ENCODE measurements at regions of chr19 and their contacts with region 1.

Region 1: DNA sequence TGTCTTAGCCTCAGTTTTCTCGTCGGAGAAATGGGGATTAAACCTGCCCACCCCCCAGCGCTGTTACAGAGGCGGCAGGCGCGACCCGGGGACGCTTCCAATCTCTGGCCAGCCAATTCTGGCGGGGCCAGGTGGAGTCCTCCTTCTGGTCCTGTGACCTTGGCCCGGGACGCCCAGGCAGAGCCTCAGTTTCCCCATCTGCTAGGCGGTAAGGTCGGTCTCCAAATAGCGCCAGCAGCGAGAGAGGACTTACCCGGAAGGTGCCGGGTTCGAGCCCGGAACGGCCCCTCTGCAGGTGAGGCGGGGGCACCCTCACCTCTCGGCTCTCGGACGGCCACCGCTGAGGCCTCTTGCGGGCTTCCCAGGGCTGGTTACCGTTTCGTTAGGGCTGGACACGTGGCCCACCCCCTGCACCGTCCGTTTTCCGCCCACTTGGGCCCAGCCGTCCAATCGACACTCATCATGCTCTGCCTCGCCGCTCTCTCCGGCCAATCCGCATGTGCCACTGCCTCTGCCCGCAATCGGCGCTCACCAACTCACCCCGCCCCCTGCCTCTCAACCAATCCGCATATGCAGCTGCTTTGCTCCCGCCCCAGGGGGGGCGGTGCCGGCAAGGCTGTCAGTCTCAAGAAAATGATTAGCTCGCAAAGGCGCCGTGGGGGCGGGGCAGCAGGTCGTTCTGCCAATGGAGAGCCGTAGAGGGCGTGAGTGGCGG is at the start of gene ISOC2:
- DNase-seq: peak; percentile 100
- ATAC-seq: peak; percentile 98
- H3K4me3 Mint-ChIP-seq: peak within 1 kb of the TSS; percentile 80
- H3K27ac Mint-ChIP-seq: peak within 1 kb of the TSS; percentile 82
- H3K4me1 Mint-ChIP-seq: peaks cover 14% of the 10 kb centered on the region
- H3K27me3 Mint-ChIP-seq: no peaks in the 10 kb centered on the region
- total RNA-seq, gene ISOC2: 24.3 to 28.0 TPM

Region 2: GRCh38 chr19:55166530-55167268 is 294.7 kb before region 1 on chr19 and contains the start of gene DNAAF3:
- CTCF ChIA-PET with region 1: interaction called, 3 read pairs
- POLR2A ChIA-PET with region 1: no interaction called
- intact Hi-C with region 1: loop called in 1 of 2 experiments (anchors 2 kb)
- DNase-seq: peak; percentile 95
- ATAC-seq: peak; percentile 95
- H3K4me3 Mint-ChIP-seq: peak within 1 kb of the TSS; percentile 71
- H3K27ac Mint-ChIP-seq: peak within 1 kb of the TSS; percentile 11
- H3K4me1 Mint-ChIP-seq: peaks cover 10% of the 10 kb centered on the region
- H3K27me3 Mint-ChIP-seq: peaks cover 45% of the 10 kb centered on the region
- total RNA-seq, gene DNAAF3: 0.53 to 0.72 TPM

Region 3: DNA sequence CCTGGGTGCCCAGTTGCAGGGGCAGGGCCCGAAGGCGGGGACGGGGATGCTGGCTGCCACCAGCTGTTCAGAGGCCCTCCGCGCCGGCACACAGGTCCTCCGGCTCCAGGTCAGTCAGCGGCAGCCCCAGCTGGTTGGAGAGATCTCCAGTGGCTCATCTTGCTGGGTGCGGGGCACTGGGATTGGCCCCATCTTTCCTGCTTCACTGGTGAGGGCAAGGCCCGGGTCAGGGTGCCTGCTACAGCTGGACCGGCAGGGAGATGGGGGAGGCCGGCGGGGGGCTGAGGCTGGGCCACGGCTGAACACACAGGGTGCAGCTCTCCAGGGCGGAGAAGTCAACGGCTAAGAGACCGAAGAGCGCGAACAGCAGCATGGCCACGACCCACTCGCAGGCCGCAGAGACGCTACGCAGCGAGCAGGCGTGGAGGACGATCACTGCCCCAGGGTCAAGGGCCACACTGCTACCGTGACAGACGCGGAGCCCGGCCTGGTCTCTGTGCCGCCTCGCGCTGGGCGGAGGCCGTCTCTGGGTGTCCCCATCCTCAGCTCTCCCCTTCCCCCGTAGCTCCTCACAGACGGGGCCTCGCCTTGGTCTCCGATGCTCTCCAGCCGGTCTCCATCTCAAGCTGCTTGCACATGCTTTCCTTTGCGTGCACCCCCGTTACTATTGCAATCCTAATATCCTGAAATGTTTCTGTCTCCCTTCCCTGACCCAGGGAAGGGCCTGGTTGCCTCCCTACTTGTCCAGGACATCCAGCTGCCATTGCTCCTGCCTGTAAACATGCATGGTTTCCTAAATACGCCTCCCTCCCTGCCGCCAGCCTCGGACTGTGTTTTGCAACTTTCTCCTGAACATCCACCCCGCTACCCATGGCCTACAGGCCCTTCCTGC is 148.5 kb before region 1 on chr19:
- CTCF ChIA-PET with region 1: no interaction called
- POLR2A ChIA-PET with region 1: no interaction called
- intact Hi-C with region 1: no loop called
- DNase-seq: no peak
- ATAC-seq: no peak
- H3K4me3 Mint-ChIP-seq: no peak overlapping the region
- H3K27ac Mint-ChIP-seq: no peak overlapping the region
- H3K4me1 Mint-ChIP-seq: no peaks in the 10 kb centered on the region
- H3K27me3 Mint-ChIP-seq: no peaks in the 10 kb centered on the region

Region 4: DNA sequence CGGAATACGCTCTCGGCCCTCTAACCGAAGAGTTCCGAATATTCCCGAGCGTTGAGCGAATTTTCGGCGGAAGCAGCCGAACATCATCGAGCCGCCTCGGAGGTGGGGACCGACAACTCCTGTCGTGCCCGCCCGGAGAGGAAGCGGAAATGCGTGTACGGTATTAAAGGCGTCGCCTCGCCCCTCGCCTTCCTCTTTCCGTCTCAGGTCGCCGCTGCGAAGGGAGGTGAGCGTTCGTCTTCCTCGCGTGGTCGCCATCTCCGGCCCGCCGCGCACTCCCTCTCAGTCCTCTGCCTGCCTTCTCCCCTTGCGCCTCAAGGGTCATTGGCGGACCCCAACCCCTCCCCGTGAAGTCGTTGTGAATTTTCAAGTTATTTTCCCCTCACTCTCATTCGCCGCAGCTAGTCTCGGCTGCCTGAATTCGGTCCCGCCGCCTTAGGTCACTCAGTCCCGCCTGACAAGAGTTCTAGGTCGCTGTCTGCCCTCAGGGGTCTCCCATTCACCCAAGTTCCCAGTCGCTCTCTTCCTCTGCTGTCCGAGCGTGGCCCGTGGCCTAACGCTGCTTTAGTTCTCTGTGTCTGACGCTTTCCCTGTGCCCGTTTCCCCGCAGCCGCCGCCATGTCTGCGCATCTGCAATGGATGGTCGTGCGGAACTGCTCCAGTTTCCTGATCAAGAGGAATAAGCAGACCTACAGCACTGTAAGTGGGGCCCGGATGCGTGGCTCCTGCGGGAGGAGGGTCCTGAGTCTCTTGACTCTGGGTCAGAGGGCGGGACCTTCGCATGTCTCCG is 75.5 kb before region 1 on chr19 and contains the start of gene RPL28:
- CTCF ChIA-PET with region 1: no interaction called
- POLR2A ChIA-PET with region 1: interaction called, 5 read pairs
- intact Hi-C with region 1: loop called in 1 of 2 experiments (anchors 1 kb)
- DNase-seq: peak; percentile 98
- ATAC-seq: peak; percentile 85
- H3K4me3 Mint-ChIP-seq: peak within 1 kb of the TSS; percentile 89
- H3K27ac Mint-ChIP-seq: peak within 1 kb of the TSS; percentile 98
- H3K4me1 Mint-ChIP-seq: peaks cover 51% of the 10 kb centered on the region
- H3K27me3 Mint-ChIP-seq: no peaks in the 10 kb centered on the region
- total RNA-seq, gene RPL28: 2,751 to 4,078 TPM

Region 5: DNA sequence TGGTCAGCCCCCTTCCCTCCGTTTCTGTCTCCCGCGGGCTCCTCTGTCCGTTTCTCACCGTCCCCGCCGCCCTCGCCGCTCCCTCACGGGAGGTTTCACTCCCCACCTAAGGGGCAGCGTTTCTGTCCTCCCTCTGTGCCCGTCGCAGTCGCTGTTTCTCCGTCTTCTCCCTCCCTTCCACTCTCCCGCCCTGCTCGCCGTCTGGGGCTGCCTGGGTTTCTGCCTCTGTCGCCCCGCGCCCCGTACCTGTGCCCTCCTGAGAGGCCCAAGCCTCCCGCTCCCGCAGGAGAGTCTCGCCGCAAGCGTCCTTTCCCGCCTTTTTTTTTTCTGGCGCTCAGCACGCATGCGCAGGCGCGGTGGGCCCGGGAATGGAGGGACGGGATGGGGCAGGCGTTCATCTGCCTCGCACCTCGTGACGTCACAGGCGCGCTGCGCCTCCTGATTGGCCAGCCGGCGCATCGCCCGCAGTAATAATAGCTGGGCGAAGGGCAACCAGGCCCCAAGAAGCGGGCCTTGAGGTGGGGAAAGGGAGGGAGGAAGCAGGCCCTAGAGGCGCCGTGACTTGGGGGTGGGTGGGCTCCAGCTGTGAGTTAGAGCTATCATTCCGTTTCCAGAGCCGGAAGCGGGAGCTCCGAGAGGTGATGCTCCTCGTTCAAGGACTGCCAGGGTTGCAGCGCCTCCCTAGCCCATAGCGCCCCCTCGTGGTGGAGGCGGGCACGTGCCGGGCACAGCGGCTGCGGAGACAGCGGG is 42.3 kb after region 1 on chr19:
- CTCF ChIA-PET with region 1: interaction called, 30 read pairs
- POLR2A ChIA-PET with region 1: no interaction called
- intact Hi-C with region 1: loop called in 1 of 2 experiments (anchors 2 kb)
- DNase-seq: peak; percentile 96
- ATAC-seq: peak; percentile 97
- H3K4me3 Mint-ChIP-seq: peak overlapping the region; percentile 65
- H3K27ac Mint-ChIP-seq: peak overlapping the region; percentile 67
- H3K4me1 Mint-ChIP-seq: peaks cover 19% of the 10 kb centered on the region
- H3K27me3 Mint-ChIP-seq: no peaks in the 10 kb centered on the region

Region 6: DNA sequence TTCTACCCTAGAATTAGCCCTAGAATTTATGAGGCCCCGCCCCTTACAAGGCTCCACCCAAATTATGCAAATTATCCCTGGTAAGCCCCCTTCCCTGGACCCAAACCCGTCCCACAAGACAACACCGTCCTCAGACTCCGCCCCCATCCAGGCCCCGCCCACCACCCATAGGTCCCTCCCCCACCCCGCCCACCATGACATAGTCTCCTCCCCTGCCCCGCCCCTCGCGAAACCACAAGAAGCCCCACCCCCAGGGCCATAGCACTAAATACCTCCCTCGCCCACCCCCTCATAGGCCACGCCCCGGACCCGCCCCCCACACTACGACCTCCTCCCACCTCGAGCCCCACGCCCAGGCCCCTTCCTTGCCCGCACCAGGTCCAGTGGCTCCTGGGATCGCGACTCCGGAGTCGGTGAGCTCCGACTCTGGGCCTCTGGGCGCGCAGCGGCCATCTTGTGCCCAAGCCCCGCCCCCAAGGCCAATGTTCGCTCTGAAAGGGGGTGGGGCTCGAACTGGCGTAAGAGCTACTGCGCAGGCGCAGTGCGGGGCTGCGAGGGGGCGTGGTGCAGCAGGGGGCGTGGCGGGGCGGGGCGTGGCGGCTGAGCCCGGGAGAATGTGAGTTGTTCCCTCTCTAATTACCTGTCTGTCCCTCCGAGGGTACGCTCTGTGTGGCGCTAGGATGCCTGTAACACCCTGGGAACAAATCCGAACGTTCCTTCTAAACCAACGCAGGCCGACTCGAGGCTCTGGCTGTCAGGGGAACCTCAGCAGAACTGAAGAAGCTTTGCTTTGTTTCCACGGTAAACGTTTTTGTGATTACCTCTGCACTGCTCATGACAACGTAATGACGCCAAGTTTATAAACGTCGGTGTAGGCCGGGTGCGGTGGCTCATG is 162.9 kb after region 1 on chr19 and contains the start of gene ZNF784:
- CTCF ChIA-PET with region 1: interaction called, 3 read pairs
- POLR2A ChIA-PET with region 1: no interaction called
- intact Hi-C with region 1: loop called in 1 of 2 experiments (anchors 1 kb)
- DNase-seq: peak; percentile 97
- ATAC-seq: peak; percentile 70
- H3K4me3 Mint-ChIP-seq: peak within 1 kb of the TSS; percentile 79
- H3K27ac Mint-ChIP-seq: peak within 1 kb of the TSS; percentile 85
- H3K4me1 Mint-ChIP-seq: peaks cover 53% of the 10 kb centered on the region
- H3K27me3 Mint-ChIP-seq: no peaks in the 10 kb centered on the region
- total RNA-seq, gene ZNF784: 3.2 to 4.3 TPM